Activated CD8-positive, alpha-beta memory T cell treated with anti-CD3 and anti-CD28 coated beads, Interleukin-2, amount 10 ng/mL, durations not matched to agents 7 days and 5 days (primary cell): ENCODE measurements at regions of chr10 and their contacts with region 1.

Region 1: GRCh38 chr10:119207367-119207668 is at the start of gene GRK5:
- DNase-seq: peak; percentile 98
- ATAC-seq: peak; percentile 89
- H3K4me3 Mint-ChIP-seq: peak within 1 kb of the TSS; percentile 89
- H3K27ac Mint-ChIP-seq: peak within 1 kb of the TSS; percentile 97
- H3K4me1 Mint-ChIP-seq: peaks cover 44% of the 10 kb centered on the region
- H3K27me3 Mint-ChIP-seq: no peaks in the 10 kb centered on the region
- total RNA-seq, gene GRK5: 23.2 to 29.5 TPM

Region 2: GRCh38 chr10:119070395-119071165 is 136.7 kb before region 1 on chr10:
- CTCF ChIA-PET with region 1: no interaction called
- DNase-seq: no peak
- ATAC-seq: no peak
- H3K4me3 Mint-ChIP-seq: no peak overlapping the region
- H3K27ac Mint-ChIP-seq: peak overlapping the region; percentile 8
- H3K4me1 Mint-ChIP-seq: peaks cover 46% of the 10 kb centered on the region
- H3K27me3 Mint-ChIP-seq: no peaks in the 10 kb centered on the region

Region 3: DNA sequence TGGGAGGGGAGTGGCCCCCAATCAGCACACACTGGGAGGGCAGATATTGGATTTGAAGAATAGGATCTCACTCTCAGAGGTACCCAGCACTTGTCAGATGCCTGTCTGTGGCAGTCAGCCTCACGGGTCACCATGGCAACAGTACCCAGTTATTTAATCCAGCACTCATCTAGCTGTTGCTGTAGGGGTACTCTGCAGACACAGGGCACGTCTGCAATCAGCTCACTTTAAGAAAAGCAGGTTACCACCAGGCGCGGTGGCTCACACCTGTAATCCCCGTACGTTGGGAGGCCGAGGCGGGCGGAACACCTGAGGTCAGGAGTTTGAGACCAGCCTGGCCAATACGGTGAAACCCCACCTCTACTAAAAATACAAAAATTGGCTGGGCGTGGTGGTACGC is 53.7 kb before region 1 on chr10:
- CTCF ChIA-PET with region 1: no interaction called
- DNase-seq: no peak
- ATAC-seq: no peak
- H3K4me3 Mint-ChIP-seq: no peak overlapping the region
- H3K27ac Mint-ChIP-seq: no peak overlapping the region
- H3K4me1 Mint-ChIP-seq: no peaks in the 10 kb centered on the region
- H3K27me3 Mint-ChIP-seq: no peaks in the 10 kb centered on the region

Region 4: DNA sequence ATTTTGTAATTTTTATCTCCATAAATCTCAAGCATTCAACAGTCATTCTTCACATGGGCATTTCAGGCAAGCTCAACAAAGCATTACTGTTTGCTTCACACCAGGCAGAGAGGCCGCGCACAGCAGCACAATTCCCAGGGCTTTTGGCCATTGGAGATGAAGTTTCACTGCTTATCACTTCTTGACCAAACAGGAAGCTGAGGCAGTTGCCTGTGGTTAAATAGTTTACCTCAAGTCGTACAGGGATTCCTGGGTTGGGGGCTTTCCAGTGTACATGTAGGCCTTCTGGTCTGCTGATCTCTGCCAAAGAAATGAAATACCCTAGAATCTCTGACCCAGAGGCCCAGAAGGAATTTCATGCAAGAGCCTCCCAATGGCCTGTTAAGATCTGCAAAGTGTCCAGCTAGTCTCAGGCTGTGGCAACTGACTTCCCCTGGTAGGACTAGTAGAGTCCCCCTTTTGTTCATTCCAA is 17.5 kb before region 1 on chr10:
- CTCF ChIA-PET with region 1: interaction called, 16 read pairs
- DNase-seq: peak; percentile 54
- ATAC-seq: peak; percentile 30
- H3K4me3 Mint-ChIP-seq: no peak overlapping the region
- H3K27ac Mint-ChIP-seq: no peak overlapping the region
- H3K4me1 Mint-ChIP-seq: peaks cover 22% of the 10 kb centered on the region
- H3K27me3 Mint-ChIP-seq: no peaks in the 10 kb centered on the region

Region 5: GRCh38 chr10:119270762-119271366 is 63.5 kb after region 1 on chr10:
- CTCF ChIA-PET with region 1: interaction called, 11 read pairs
- DNase-seq: peak; percentile 87
- ATAC-seq: peak; percentile 60
- H3K4me3 Mint-ChIP-seq: peak overlapping the region; percentile 49
- H3K27ac Mint-ChIP-seq: peak overlapping the region; percentile 95
- H3K4me1 Mint-ChIP-seq: peaks cover 58% of the 10 kb centered on the region
- H3K27me3 Mint-ChIP-seq: no peaks in the 10 kb centered on the region

Region 6: DNA sequence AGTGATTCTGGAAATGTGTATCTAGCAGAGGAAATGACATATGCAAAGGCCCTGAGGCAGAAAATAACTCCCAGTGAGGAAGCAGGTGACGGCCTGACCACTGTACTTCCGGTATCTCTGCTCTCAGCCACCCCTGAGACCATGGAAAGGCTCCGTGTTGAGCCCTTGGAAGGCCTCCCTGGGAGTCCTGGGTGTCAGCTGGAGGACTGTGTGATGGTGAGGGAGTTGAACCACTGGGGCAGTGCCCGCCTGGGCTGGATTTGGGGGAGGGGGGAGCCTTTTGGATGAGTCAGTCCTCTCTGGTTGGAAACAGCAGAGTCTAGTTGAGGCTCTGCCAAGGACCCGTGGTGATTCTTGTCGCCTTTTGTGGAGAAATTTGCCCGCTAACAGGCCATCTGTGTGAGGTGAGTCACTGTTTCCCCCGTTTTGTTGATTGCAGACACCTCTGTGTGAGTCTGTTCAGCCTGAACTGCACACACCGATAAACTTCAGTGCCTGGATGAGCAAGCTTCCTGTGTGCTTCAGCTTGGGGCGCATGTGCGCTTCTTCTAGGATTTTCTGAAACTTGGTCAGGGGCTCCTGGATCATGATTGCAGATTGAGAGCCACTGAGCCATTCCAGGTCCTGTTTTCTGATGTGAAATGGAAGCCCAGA is 98.7 kb after region 1 on chr10:
- CTCF ChIA-PET with region 1: interaction called, 114 read pairs
- DNase-seq: peak; percentile 96
- ATAC-seq: peak; percentile 83
- H3K4me3 Mint-ChIP-seq: peak overlapping the region; percentile 74
- H3K27ac Mint-ChIP-seq: peak overlapping the region; percentile 99
- H3K4me1 Mint-ChIP-seq: peaks cover 84% of the 10 kb centered on the region
- H3K27me3 Mint-ChIP-seq: peaks cover 11% of the 10 kb centered on the region

Region 7: GRCh38 chr10:119445311-119445934 is 238.1 kb after region 1 on chr10:
- CTCF ChIA-PET with region 1: interaction called, 22 read pairs
- DNase-seq: peak; percentile 87
- ATAC-seq: peak; percentile 85
- H3K4me3 Mint-ChIP-seq: no peak overlapping the region
- H3K27ac Mint-ChIP-seq: no peak overlapping the region
- H3K4me1 Mint-ChIP-seq: peaks cover 6% of the 10 kb centered on the region
- H3K27me3 Mint-ChIP-seq: no peaks in the 10 kb centered on the region

Region 8: GRCh38 chr10:119542988-119543813 is 335.9 kb after region 1 on chr10:
- CTCF ChIA-PET with region 1: interaction called, 25 read pairs
- DNase-seq: peak; percentile 83
- ATAC-seq: peak; percentile 28
- H3K4me3 Mint-ChIP-seq: peak overlapping the region; percentile 75
- H3K27ac Mint-ChIP-seq: peak overlapping the region; percentile 83
- H3K4me1 Mint-ChIP-seq: peaks cover 45% of the 10 kb centered on the region
- H3K27me3 Mint-ChIP-seq: peaks cover 18% of the 10 kb centered on the region